SK-N-SH (cell line): ENCODE measurements at regions of chr6 and their contacts with region 1.

Region 1: DNA sequence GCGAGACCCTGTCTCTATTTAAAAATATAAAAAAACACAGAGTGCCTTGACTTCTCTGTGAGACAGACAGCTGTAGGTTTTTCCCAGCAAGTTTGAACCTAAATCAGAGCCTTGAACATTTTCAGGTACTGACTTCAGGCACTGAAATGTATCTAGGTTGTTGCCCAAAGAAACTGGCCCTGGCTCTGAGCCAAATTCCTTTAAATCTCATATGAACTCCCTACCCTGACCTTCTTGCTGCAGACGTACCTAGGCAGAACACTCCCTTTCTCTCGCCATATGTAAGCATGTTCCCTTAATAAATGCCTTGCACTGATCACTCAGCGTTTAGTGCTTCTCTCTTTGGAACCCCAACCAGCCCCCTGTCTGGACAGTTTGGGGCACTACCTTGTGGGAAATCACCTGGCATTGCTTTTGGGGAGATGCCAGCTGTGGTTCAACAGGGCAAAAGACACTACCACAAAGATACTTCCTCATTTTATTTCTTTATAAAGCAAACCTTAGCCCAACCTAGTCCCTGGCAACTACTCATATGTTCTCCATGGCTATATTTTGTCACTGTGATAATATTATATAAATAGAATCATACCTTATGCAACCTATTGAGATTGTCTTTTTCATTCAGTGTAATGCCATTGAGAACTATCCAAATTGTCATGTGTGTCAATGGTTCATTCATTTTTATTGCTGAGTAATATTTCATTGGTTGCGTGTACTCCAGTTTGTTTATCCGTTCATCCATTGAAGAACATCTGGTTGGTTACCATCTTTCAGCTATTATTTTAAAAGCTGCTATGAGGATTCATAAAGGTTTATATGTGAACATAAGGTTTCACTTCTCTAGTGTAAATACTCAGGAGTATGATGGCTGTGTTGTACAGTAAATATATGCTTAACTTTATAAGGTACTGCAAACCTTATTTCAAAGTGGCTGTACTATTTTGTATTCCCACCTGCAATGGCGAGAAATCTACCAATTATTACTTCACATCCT is 115.0 kb downstream of the MOXD1 start:
- DNase-seq: no peak
- H3K4me3 ChIP-seq: no peak overlapping the region
- H3K27ac ChIP-seq: no peak overlapping the region
- H3K4me1 ChIP-seq: no peaks in the 10 kb centered on the region; a peak in 1 of 4 replicates
- H3K27me3 ChIP-seq: no peaks in the 10 kb centered on the region; the same call in 1 of the 2 replicates
- CTCF ChIP-seq: no peak
- EP300 ChIP-seq: no peak
- RAD21 ChIP-seq: no peak

Region 2: DNA sequence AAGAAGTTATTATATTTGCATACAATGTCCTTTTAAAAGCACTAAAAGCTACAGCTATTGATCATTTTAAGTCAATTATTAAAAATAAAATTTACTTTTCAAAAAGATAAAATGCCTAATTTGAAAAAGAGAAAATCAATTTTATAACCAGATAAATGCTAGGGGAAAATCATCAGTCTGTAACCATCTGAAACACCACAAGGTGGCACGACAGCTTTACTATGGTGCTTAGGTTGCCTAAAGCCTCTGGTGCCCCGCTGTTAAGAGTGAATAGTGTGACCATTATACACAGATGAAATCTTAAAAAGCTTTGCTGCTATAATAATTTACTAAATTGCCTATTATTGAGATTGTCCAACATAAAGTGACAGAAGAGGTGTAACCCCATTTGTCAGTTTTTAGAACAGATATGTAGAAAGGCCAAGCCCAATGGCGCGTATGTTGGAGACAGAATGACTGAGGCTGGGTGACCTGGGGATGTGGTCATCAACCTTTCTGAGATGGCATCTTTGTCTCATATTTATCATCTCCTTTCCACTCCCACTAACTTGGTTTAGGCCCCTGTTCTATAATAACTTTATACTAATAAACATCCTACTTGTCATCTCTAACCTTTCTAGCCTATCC is 14.1 kb after region 1 on chr6:
- CTCF ChIA-PET with region 1: interaction called, 124 read pairs
- POLR2A ChIA-PET with region 1: no interaction called
- DNase-seq: peak; percentile 14
- H3K4me3 ChIP-seq: no peak overlapping the region; a peak in 1 of 4 replicates
- H3K27ac ChIP-seq: no peak overlapping the region
- H3K4me1 ChIP-seq: no peaks in the 10 kb centered on the region; a peak in 1 of 4 replicates
- H3K27me3 ChIP-seq: no peaks in the 10 kb centered on the region
- CTCF ChIP-seq: peak; percentile 82
- EP300 ChIP-seq: no peak
- RAD21 ChIP-seq: peak; percentile 71